Activated T-helper 2 cell treated with anti-CD3 and anti-CD28 coated beads, Interferon-gamma antibody, Interleukin-2, Interleukin-4, amounts not matched to agents 10 μg/mL and 5 μg/mL and 100 μg/mL, durations not matched to agents 14 hours and 24 hours and 36 hours (primary cell): ENCODE measurements at regions of chr16 and their contacts with region 1.

Region 1: DNA sequence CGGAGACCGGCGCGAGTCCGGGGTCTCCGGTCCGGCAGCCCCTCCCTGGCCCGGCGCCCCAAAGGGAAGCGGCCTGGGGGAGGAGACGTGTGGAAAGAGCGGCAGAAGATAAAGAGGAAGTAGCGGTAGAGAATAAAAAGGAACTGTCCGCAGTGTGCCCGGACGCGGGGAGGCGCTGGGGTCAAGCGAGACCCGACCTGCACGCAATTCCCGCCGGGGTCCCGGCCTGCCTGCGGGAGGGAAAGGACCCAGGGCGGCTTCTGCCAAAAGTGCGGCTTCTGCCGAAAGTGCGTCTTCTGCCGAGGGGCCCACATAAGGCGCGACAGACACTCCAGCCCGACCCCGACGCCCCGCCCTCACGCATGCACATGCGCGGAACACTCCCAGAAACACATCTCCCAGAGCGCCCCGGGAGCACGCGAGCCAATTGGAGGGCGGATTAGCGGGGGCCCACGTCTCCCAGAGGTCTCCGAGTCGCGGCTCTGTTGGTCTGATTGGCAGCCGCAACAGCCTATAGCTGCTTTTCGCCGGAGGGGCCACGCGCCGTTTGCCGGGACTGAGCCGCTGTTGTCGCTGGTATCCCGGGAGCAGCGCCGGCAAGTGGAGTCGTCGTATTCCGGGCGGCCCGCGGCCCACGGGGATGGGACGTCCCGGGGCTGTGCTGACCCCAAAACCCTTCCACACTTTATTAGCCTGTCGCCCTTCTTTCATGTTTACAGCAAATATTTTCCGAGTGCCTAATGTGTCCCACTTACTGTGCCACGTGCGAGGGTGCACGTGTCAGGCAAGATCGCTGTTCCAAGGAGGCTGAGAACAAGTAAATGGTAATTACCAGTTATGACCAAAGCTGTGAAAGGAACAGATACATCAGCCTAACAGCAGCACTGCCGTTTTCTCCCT is 8.0 kb upstream of the MEFV start:
- DNase-seq: peak; percentile 97
- H3K4me3 Mint-ChIP-seq: peak overlapping the region; percentile 89
- H3K27ac Mint-ChIP-seq: peak overlapping the region; percentile 88
- H3K4me1 Mint-ChIP-seq: peaks cover 8% of the 10 kb centered on the region
- H3K27me3 Mint-ChIP-seq: no peaks in the 10 kb centered on the region

Region 2: GRCh38 chr16:2883027-2883851 is 381.1 kb before region 1 on chr16 and contains the start of gene FLYWCH2:
- intact Hi-C with region 1: no loop called
- DNase-seq: peak; percentile 100
- H3K4me3 Mint-ChIP-seq: peak within 1 kb of the TSS; percentile 86
- H3K27ac Mint-ChIP-seq: peak within 1 kb of the TSS; percentile 94
- H3K4me1 Mint-ChIP-seq: peaks cover 14% of the 10 kb centered on the region
- H3K27me3 Mint-ChIP-seq: peaks cover 2% of the 10 kb centered on the region
- total RNA-seq, gene FLYWCH2: 21.0 and 23.6 TPM in 2 replicates

Region 3: GRCh38 chr16:3234543-3235541 is 29.5 kb before region 1 on chr16 and contains the start of gene ZNF200:
- intact Hi-C with region 1: loop called (anchors 1 kb)
- DNase-seq: peak; percentile 91
- H3K4me3 Mint-ChIP-seq: peak within 1 kb of the TSS; percentile 97
- H3K27ac Mint-ChIP-seq: peak within 1 kb of the TSS; percentile 91
- H3K4me1 Mint-ChIP-seq: peaks cover 15% of the 10 kb centered on the region
- H3K27me3 Mint-ChIP-seq: peaks cover 2% of the 10 kb centered on the region
- total RNA-seq, gene ZNF200: 11.0 and 12.2 TPM in 2 replicates

Region 4: GRCh38 chr16:3305109-3306068 is 41.0 kb after region 1 on chr16 and contains the starts of genes TIGD7 and ZNF75A:
- intact Hi-C with region 1: loop called (anchors 1 kb)
- DNase-seq: peak; percentile 83
- H3K4me3 Mint-ChIP-seq: peak within 1 kb of the TSS; percentile 77
- H3K27ac Mint-ChIP-seq: peak within 1 kb of the TSS; percentile 78
- H3K4me1 Mint-ChIP-seq: peaks cover 8% of the 10 kb centered on the region
- H3K27me3 Mint-ChIP-seq: no peaks in the 10 kb centered on the region
- total RNA-seq, gene TIGD7: 2.5 and 3.6 TPM in 2 replicates
- total RNA-seq, gene ZNF75A: 25.4 and 31.8 TPM in 2 replicates

Region 5: GRCh38 chr16:3457434-3458252 is 193.3 kb after region 1 on chr16:
- intact Hi-C with region 1: loop called (anchors 5 kb)
- DNase-seq: peak; percentile 86
- H3K4me3 Mint-ChIP-seq: peak overlapping the region; percentile 80
- H3K27ac Mint-ChIP-seq: peak overlapping the region; percentile 70
- H3K4me1 Mint-ChIP-seq: peaks cover 35% of the 10 kb centered on the region
- H3K27me3 Mint-ChIP-seq: no peaks in the 10 kb centered on the region